Activated CD8-positive, alpha-beta T cell treated with anti-CD3 and anti-CD28 coated beads for 36 hours (primary cell): ENCODE measurements at regions of chr5 and their contacts with region 1.

Region 1: DNA sequence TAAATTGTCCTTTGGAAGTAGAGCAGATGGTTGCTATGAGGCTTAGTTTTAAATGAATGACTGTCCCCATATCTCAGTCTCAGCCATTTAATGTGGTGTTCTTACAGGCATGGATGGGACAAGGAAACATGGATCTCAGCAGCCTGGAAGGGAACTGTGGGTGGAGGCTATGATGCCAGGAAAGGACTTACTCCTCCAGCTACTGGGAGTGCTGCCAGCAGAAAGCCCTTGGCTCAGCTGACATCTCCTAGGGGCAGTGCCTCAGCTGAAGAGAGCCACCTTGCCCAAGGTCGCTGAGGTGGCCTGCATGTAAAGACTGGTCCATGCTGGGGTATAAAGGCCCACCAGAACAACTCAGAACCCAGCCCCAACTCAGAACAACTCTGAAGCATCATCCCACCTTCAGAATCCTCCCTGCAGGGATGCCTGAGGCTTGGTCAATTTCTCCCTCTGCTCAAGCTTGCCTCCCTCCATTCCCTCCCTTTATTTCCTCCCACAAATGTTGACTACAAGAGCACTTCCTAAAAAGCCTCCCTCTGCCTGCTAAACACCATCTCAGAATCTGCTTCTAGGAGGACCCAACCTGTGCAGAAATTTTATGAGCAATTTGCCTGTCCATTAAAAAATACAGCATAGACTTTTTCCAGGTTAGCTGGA is 1.8 kb upstream of the PDE8B start:
- DNase-seq: no peak
- ATAC-seq: no peak
- H3K4me3 Mint-ChIP-seq: no peak overlapping the region
- H3K27ac Mint-ChIP-seq: no peak overlapping the region
- H3K4me1 Mint-ChIP-seq: peaks cover 11% of the 10 kb centered on the region
- H3K27me3 Mint-ChIP-seq: peaks cover 49% of the 10 kb centered on the region
- CTCF ChIP-seq: no peak

Region 2: DNA sequence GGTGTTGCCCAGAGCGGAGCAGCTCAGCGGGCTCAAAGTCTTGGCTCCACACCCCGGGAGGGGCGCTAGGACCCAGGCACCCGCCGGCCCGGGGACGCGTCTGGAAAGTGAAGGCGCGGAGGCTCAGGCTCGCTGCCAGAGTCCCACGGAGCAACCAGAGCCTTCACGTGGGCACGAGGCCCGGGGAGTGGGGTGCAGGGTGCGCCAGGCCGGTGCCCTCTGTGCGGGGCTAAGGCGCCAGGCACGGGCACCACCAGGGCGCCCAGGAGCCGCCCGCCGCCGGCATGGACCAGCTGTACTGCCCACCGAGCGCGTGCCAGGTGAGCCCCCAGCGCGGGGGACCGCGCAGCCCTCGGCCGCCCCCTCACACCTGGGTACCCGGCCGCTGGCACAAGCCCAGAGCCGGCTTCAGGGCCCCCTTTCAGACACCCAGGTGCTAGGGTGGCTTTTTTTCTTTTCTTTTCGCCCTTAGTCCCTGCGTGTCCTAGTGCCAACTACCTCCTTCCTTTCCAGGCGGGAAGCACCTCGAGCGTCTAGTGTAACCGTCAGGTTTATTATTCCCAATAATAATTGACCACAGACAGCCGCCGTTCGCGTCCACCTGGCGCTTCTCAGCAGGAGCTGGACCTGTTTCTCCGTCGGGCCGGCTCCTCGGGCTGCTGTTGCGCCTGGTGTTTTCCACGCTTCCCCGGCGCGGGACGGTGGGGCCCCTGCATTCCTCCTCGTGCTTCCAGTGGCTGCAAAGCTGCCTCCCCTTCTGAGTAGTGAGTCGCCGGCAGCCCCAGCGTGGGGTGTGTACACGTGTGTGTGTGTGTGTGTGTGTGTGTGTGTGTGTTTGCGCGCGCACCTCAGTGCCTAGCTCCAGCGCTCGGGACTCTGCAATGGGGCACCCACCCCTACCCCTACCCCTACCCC is 28.2 kb before region 1 on chr5:
- CTCF ChIA-PET with region 1: no interaction called
- POLR2A ChIA-PET with region 1: no interaction called
- intact Hi-C with region 1: no loop called
- DNase-seq: no peak
- ATAC-seq: peak; percentile 30
- H3K4me3 Mint-ChIP-seq: peak overlapping the region; percentile 9
- H3K27ac Mint-ChIP-seq: no peak overlapping the region
- H3K4me1 Mint-ChIP-seq: no peaks in the 10 kb centered on the region
- H3K27me3 Mint-ChIP-seq: peaks cover 34% of the 10 kb centered on the region
- CTCF ChIP-seq: no peak

Region 3: GRCh38 chr5:78269088-78269703 is 1060.6 kb after region 1 on chr5:
- CTCF ChIA-PET with region 1: no interaction called
- POLR2A ChIA-PET with region 1: no interaction called
- intact Hi-C with region 1: loop called (anchors 10 kb)
- DNase-seq: no peak
- ATAC-seq: no peak
- H3K4me3 Mint-ChIP-seq: no peak overlapping the region
- H3K27ac Mint-ChIP-seq: no peak overlapping the region
- H3K4me1 Mint-ChIP-seq: peaks cover 20% of the 10 kb centered on the region
- H3K27me3 Mint-ChIP-seq: no peaks in the 10 kb centered on the region
- CTCF ChIP-seq: peak; percentile 63